IMR-90 (cell line): ENCODE measurements at regions of chr13 and their contacts with region 1.

Region 1: DNA sequence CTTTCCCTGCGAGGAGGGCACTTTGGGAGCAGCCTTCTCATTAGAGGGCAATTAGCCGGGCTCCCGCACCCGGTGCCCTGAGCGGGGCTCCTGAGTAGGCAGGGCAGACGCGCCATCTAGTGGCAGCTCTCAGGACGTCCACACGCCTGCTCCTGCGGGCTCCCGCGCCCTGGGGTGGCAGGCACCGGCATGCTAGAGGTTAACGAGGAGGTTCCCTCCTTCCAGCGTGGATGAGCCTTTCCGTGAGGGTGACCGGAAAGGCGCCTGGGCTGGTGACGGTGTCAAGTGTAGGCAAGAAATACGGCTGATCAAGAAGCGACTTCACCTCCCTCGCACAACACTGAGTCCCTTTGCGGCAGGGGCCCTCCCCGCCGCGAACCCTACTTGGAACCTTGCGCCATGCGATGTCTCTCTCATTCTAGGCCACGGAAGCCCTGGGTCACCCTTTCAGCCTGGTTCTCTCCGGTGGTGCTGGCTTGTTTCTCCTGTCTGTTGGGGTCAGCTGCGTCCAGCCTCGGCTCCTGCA is 67.7 kb downstream of the ALOX5AP start:
- DNase-seq: peak; percentile 70
- ATAC-seq: peak; percentile 88
- H3K4me3 ChIP-seq: no peak overlapping the region
- H3K27ac ChIP-seq: peak overlapping the region; percentile 10
- H3K4me1 ChIP-seq: peaks cover 24% of the 10 kb centered on the region
- H3K27me3 ChIP-seq: no peaks in the 10 kb centered on the region
- CTCF ChIP-seq: peak; percentile 89
- POLR2A ChIP-seq: no peak
- RAD21 ChIP-seq: peak; percentile 98

Region 2: DNA sequence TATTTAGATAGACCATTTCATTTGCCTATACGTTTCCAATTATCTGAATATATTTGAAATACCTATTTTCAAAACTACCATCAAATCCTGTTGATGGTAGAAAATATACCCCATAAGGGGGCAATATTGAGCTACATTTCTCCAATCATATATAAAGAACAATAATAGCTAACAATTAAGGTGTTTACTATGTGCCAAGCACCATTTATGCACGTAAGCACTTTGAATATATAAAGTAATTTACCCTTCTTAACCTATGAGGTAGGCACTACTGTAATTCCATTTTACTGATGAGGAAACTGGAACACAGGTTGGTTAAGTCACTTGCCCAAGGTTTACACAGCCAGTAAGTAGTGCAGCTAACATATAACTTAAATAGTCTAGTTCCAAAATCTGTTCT is 1031.8 kb before region 1 on chr13:
- CTCF ChIA-PET with region 1: no interaction called
- POLR2A ChIA-PET with region 1: no interaction called
- dilution Hi-C with region 1: no loop called
- in situ Hi-C with region 1: no loop called
- intact Hi-C with region 1: no loop called
- DNase-seq: peak; percentile 49
- ATAC-seq: no peak; the same call in 1 of the 2 replicates
- H3K4me3 ChIP-seq: no peak overlapping the region
- H3K27ac ChIP-seq: no peak overlapping the region
- H3K4me1 ChIP-seq: 0 out of 2 replicates have a peak, but pooled peaks cover 2% of the 10 kb centered on the region
- H3K27me3 ChIP-seq: no peaks in the 10 kb centered on the region
- CTCF ChIP-seq: peak; percentile 59
- POLR2A ChIP-seq: no peak
- RAD21 ChIP-seq: peak; percentile 64

Region 3: DNA sequence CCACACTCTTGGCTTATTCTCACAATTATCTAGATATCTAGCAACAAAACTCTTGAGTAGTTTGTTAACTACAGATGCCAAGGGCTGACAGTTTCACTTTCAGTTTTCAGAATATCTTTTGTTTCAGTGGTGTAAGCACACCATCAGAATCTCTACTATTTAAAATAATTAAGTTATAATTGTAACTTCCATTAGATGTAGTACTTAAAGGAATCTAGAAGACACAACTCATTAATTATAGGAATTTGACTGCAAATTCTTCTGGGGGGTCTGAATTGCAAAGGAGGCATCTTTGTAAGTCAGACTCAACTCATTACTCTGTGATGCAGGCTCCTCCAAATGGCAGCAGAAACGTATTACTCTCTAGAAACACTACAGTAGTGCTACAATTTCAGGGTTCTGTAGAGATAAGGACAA is 230.1 kb before region 1 on chr13:
- CTCF ChIA-PET with region 1: no interaction called
- POLR2A ChIA-PET with region 1: no interaction called
- dilution Hi-C with region 1: no loop called
- in situ Hi-C with region 1: no loop called
- intact Hi-C with region 1: loop called (anchors 5 kb)
- DNase-seq: peak; percentile 57
- ATAC-seq: peak; percentile 58
- H3K4me3 ChIP-seq: peak overlapping the region; percentile 48; the same call in 1 of the 2 replicates
- H3K27ac ChIP-seq: peak overlapping the region; percentile 51; the same call in 1 of the 2 replicates
- H3K4me1 ChIP-seq: peaks cover 10% of the 10 kb centered on the region
- H3K27me3 ChIP-seq: no peaks in the 10 kb centered on the region
- CTCF ChIP-seq: peak; percentile 49
- POLR2A ChIP-seq: no peak
- RAD21 ChIP-seq: peak; percentile 52

Region 4: GRCh38 chr13:30690282-30691188 is 112.5 kb before region 1 on chr13:
- CTCF ChIA-PET with region 1: no interaction called
- POLR2A ChIA-PET with region 1: interaction called, 15 read pairs
- dilution Hi-C with region 1: no loop called
- in situ Hi-C with region 1: no loop called
- intact Hi-C with region 1: no loop called
- DNase-seq: peak; percentile 99
- ATAC-seq: peak; percentile 96
- H3K4me3 ChIP-seq: peak overlapping the region; percentile 31
- H3K27ac ChIP-seq: peak overlapping the region; percentile 85
- H3K4me1 ChIP-seq: peaks cover 9% of the 10 kb centered on the region
- H3K27me3 ChIP-seq: no peaks in the 10 kb centered on the region
- CTCF ChIP-seq: no peak
- POLR2A ChIP-seq: peak; percentile 44; the same call in 1 of the 2 replicates
- RAD21 ChIP-seq: no peak; the same call in 1 of the 2 replicates

Region 5: DNA sequence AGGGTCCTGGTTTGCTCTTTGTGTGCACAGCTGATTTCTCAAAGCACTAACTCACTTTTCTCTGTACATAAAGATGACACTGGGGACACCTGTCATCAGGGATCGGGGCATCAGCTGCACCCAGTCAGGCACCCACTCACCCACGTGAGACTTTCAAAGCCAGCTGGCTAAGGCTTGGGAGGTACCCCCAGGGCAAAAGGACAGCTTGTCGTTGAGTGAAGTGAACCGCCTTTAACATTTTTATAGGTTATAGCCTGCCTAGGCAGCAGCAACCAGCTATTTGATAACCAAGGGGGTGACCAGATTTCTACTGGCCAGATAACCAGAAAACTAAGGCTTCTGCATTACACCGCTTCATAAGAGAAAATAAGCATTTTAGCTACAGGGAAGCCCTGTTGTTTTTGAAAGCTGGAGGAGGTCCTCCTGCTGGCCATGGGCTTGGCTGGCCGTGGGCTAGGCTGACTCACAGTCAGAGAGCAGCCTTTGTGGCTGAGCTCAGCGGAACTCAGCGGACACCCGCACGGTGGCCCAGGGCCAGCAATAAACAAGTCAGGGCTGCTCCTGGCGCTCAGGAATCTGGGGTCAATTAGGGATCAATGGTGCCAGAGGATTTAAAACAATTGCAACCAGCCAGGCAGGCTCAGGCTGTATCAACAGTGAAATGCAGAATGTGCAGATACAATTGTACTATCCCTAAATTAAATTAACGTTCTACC is 10.6 kb before region 1 on chr13:
- CTCF ChIA-PET with region 1: no interaction called
- POLR2A ChIA-PET with region 1: no interaction called
- dilution Hi-C with region 1: no loop called
- in situ Hi-C with region 1: no loop called
- intact Hi-C with region 1: no loop called
- DNase-seq: peak; percentile 94
- ATAC-seq: peak; percentile 95
- H3K4me3 ChIP-seq: no peak overlapping the region
- H3K27ac ChIP-seq: peak overlapping the region; percentile 79
- H3K4me1 ChIP-seq: peaks cover 31% of the 10 kb centered on the region
- H3K27me3 ChIP-seq: no peaks in the 10 kb centered on the region
- CTCF ChIP-seq: peak; percentile 64
- POLR2A ChIP-seq: no peak
- RAD21 ChIP-seq: peak; percentile 66

Region 6: DNA sequence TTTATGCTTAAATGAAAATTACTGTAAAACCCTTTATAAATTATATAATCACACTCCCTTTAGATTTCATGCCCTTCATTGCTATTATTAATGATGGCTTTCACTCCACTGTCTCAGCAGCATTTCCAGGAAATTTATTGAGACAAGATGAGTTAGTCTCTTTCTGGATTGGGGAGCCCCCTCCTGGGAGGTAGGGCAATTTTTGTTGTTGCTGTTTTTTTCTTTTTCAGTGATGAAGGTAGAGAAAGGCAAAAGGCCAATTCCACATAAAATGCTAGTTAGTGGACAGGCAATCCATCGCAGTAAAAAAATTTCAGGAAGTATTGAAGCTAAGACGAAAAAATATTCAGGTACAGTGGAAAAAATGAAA is 209.6 kb after region 1 on chr13:
- CTCF ChIA-PET with region 1: no interaction called
- POLR2A ChIA-PET with region 1: no interaction called
- dilution Hi-C with region 1: no loop called
- in situ Hi-C with region 1: loop called (anchors 10 kb)
- intact Hi-C with region 1: loop called (anchors 10 kb)
- DNase-seq: peak; percentile 46
- ATAC-seq: no peak
- H3K4me3 ChIP-seq: no peak overlapping the region
- H3K27ac ChIP-seq: no peak overlapping the region
- H3K4me1 ChIP-seq: no peaks in the 10 kb centered on the region; the same call in 1 of the 2 replicates
- H3K27me3 ChIP-seq: no peaks in the 10 kb centered on the region; the same call in 1 of the 2 replicates
- CTCF ChIP-seq: peak; percentile 60
- POLR2A ChIP-seq: no peak
- RAD21 ChIP-seq: peak; percentile 73

Region 7: DNA sequence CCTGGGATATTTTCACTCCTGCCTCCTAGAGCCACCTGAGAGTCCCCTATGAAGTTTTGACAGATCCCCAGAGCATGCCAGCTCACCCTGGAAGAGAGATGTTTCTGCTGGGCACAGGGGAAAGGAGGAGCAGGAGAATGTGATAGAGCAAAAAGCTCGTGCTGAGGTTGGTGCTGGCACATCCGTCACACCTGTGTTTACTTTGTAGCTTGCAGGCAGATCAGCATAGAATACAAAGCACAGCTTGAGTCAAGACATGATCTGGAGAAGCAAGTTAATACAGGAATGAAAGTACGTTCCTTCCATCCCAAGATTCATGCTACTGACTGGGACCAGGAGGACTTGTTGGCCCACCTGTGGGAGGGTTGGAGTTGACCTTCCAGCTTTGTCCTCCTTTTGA is 312.6 kb after region 1 on chr13:
- CTCF ChIA-PET with region 1: no interaction called
- POLR2A ChIA-PET with region 1: no interaction called
- dilution Hi-C with region 1: no loop called
- in situ Hi-C with region 1: no loop called
- intact Hi-C with region 1: no loop called
- DNase-seq: no peak
- ATAC-seq: no peak
- H3K4me3 ChIP-seq: no peak overlapping the region
- H3K27ac ChIP-seq: no peak overlapping the region
- H3K4me1 ChIP-seq: peaks cover 6% of the 10 kb centered on the region
- H3K27me3 ChIP-seq: peaks cover 66% of the 10 kb centered on the region
- CTCF ChIP-seq: no peak
- POLR2A ChIP-seq: no peak
- RAD21 ChIP-seq: no peak